ENCODE measurements at regions of chr3 and their contacts with region 1.

Region 1: GRCh38 chr3:48151058-48151806 is 37.0 kb downstream of the CDC25A start:
- DNase-seq: peak; percentile 66
- H3K4me3 ChIP-seq: no peak overlapping the region
- H3K27ac ChIP-seq: no peak overlapping the region
- H3K4me1 ChIP-seq: peaks cover 12% of the 10 kb centered on the region
- H3K27me3 ChIP-seq: no peaks in the 10 kb centered on the region
- CTCF ChIP-seq: peak; percentile 90 to 96

Region 2: GRCh38 chr3:47836986-47837385 is 314.2 kb before region 1 on chr3:
- CTCF ChIA-PET with region 1: interaction called, 22 read pairs
- dilution Hi-C with region 1: no loop called
- in situ Hi-C with region 1: loop called in 1 of 2 experiments (anchors 10 kb)
- intact Hi-C with region 1: loop called (anchors 1 kb)
- DNase-seq: no peak
- H3K4me3 ChIP-seq: no peak overlapping the region
- H3K27ac ChIP-seq: no peak overlapping the region
- H3K4me1 ChIP-seq: no peaks in the 10 kb centered on the region
- H3K27me3 ChIP-seq: no peaks in the 10 kb centered on the region
- CTCF ChIP-seq: no peak

Region 3: GRCh38 chr3:47849699-47850563 is 301.3 kb before region 1 on chr3:
- CTCF ChIA-PET with region 1: no interaction called
- dilution Hi-C with region 1: no loop called
- in situ Hi-C with region 1: no loop called
- intact Hi-C with region 1: loop called (anchors 2 kb)
- DNase-seq: no peak
- H3K4me3 ChIP-seq: no peak overlapping the region
- H3K27ac ChIP-seq: no peak overlapping the region
- H3K4me1 ChIP-seq: no peaks in the 10 kb centered on the region
- H3K27me3 ChIP-seq: no peaks in the 10 kb centered on the region
- CTCF ChIP-seq: peak; percentile 35 to 38

Region 4: DNA sequence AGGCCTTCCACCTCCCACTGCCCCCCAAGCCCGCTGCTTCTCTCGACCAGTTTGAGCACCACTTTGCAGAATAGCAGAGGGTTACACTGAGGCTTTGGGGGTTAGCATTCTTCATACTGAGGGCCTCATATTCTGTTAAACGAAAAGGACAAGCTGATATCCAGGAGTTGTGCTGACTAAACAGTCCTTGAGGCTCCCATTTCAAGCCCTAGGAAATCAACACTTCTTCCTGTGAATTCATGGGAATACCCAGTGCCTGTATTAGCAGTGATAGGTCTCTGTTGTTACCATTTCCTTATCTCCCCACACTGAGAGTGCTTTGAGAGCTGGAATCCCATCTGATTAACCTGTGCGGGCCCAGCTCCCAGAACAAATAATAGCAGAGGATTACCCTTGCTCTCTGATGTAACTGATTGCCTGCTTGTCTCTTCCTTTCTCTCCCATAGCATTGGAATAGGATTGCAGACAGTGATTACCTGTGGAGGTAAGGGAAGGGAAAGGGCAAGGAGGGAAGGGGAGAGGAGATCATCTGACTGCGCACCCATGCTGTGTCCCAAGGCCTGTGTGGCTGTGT is 221.7 kb after region 1 on chr3:
- CTCF ChIA-PET with region 1: no interaction called
- dilution Hi-C with region 1: no loop called
- in situ Hi-C with region 1: no loop called
- intact Hi-C with region 1: no loop called
- DNase-seq: no peak
- H3K4me3 ChIP-seq: no peak overlapping the region
- H3K27ac ChIP-seq: no peak overlapping the region
- H3K4me1 ChIP-seq: no peaks in the 10 kb centered on the region
- H3K27me3 ChIP-seq: no peaks in the 10 kb centered on the region
- CTCF ChIP-seq: no peak